Activated B cell treated with CpG ODN at 0.5 μM for 24 hours (primary cell): ENCODE measurements at regions of chr12 and their contacts with region 1.

Region 1: DNA sequence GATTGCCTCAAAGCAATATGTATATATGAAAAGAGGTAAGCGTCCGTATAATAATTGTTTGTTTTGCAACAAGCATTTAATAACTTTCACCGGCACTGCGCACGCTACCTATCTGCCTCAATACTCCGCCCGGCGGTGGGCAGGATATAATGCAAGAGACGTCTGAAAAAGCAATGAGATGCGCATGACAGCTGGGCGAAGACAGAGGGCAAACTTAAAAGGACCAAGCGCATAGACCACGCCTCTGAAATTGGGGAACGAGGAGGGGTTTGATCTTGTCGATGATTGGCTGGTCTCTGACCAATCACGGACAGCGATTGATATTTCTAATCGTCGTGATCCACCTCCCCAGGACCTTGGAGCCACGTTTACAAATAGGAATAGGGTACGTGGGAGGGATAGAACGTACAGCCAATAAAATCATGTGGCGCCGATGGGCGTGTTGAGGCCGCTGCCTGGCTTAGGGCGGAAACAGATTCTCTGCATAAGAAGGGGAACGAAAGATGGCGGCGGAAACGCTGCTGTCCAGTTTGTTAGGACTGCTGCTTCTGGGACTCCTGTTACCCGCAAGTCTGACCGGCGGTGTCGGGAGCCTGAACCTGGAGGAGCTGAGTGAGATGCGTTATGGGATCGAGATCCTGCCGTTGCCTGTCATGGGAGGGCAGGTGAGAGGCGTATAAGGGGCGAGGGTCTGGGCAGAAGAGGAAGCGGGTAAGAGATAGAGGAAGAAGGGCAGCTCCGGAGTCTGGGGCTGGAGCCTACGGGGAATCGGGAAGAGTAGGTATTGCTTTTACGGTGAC is at the start of gene OS9:
- DNase-seq: peak; percentile 73
- ATAC-seq: peak; percentile 91
- H3K4me3 Mint-ChIP-seq: no peak within 1 kb of the TSS
- H3K27ac Mint-ChIP-seq: no peak within 1 kb of the TSS
- H3K4me1 Mint-ChIP-seq: peaks cover 2% of the 10 kb centered on the region
- H3K27me3 Mint-ChIP-seq: peaks cover 8% of the 10 kb centered on the region
- CTCF ChIP-seq: no peak
- total RNA-seq, gene OS9: 166 TPM in 2 replicates

Region 2: GRCh38 chr12:57368349-57369095 is 325.3 kb before region 1 on chr12:
- CTCF ChIA-PET with region 1: no interaction called
- POLR2A ChIA-PET with region 1: no interaction called
- intact Hi-C with region 1: no loop called
- DNase-seq: no peak
- ATAC-seq: no peak
- H3K4me3 Mint-ChIP-seq: no peak overlapping the region
- H3K27ac Mint-ChIP-seq: no peak overlapping the region
- H3K4me1 Mint-ChIP-seq: peaks cover 6% of the 10 kb centered on the region
- H3K27me3 Mint-ChIP-seq: no peaks in the 10 kb centered on the region
- CTCF ChIP-seq: no peak

Region 3: DNA sequence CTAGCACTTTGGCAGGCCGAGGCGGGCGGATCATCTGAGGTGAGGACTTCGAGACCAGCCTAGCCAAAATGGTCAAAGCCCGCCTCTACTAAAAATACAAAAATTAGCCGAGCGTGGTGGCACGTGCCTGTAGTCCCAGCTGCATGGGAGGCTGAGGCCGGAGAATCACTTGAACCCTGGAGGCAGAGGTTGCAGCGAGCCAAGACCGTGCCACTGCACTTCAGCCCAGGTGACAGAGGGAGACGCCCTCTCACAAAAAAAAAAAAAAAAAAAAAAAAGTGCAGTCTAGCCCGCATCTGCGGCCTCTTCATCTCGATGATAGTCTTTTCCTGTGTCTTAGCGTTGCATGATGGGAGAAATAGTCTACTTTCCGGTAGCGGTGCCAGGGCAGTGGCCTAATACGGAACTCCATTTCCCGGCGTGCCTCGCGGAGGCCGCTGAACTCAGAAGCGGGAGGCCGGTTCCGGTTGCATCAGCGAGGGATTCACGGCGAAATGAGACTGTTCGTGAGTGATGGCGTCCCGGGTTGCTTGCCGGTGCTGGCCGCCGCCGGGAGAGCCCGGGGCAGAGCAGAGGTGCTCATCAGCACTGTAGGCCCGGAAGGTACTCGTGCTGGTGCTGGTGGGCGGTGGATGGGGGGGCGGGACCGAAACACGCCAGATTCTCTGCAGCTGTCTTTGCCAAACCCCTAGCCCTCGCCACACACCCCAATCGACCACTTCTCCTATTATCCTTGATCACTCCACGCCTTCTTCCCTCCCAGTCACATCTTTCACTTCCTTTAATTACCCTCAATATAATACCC is 206.1 kb before region 1 on chr12 and contains the start of gene MARS1:
- CTCF ChIA-PET with region 1: no interaction called
- POLR2A ChIA-PET with region 1: no interaction called
- intact Hi-C with region 1: loop called (anchors 5 kb)
- DNase-seq: peak; percentile 83
- ATAC-seq: peak; percentile 97
- H3K4me3 Mint-ChIP-seq: peak within 1 kb of the TSS; percentile 97
- H3K27ac Mint-ChIP-seq: peak within 1 kb of the TSS; percentile 97
- H3K4me1 Mint-ChIP-seq: peaks cover 41% of the 10 kb centered on the region
- H3K27me3 Mint-ChIP-seq: no peaks in the 10 kb centered on the region
- CTCF ChIP-seq: no peak
- total RNA-seq, gene MARS1: 368 and 425 TPM in 2 replicates

Region 4: GRCh38 chr12:57546438-57547383 is 147.1 kb before region 1 on chr12 and contains the start of gene DCTN2:
- CTCF ChIA-PET with region 1: no interaction called
- POLR2A ChIA-PET with region 1: no interaction called
- intact Hi-C with region 1: loop called (anchors 1 kb)
- DNase-seq: peak; percentile 81
- ATAC-seq: peak; percentile 97
- H3K4me3 Mint-ChIP-seq: peak within 1 kb of the TSS; percentile 99
- H3K27ac Mint-ChIP-seq: peak within 1 kb of the TSS; percentile 84
- H3K4me1 Mint-ChIP-seq: peaks cover 36% of the 10 kb centered on the region
- H3K27me3 Mint-ChIP-seq: peaks cover 10% of the 10 kb centered on the region
- CTCF ChIP-seq: no peak
- total RNA-seq, gene DCTN2: 83.3 and 91.8 TPM in 2 replicates

Region 5: DNA sequence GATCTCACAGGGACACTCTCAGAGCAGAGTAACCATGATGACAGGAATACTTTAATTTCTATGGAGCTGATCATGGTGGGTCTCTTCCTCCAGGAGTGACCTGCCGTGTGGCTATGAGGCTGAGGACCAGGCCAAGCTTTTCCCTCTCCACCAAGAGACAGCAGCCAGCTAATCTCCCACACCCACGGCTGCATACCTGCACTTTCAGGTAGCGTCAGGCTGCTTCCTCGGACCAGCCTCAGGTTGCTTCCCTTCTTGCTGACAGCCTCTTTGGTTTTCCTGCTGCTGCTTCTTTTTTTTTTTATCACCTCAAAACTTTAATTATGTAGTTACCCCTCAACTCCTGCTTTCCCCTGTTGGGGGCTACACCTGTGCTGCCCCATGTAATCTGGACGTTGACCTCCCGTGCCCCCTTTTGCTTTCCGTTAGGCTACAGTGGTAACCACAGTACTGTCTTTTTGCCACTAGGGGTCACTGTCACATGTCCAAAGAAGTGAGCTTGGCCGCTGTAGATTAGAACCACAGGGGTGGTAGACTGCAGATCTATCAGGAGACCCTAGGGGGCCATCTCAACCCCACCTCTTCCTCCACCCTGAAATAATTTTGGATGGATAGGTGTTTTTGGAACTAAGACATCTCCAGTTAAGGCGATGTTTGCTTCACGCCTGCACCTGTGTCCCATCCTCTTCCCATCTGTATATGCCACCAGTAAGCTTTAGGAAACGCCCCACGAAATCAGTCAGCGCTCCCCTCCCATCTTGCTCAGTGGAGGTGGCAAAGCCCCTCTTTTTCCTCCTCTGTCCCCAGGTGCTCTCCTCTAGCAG is 110.6 kb before region 1 on chr12:
- CTCF ChIA-PET with region 1: no interaction called
- POLR2A ChIA-PET with region 1: interaction called, 3 read pairs
- intact Hi-C with region 1: loop called (anchors 1 kb)
- DNase-seq: peak; percentile 24
- ATAC-seq: peak; percentile 100
- H3K4me3 Mint-ChIP-seq: no peak overlapping the region
- H3K27ac Mint-ChIP-seq: no peak overlapping the region
- H3K4me1 Mint-ChIP-seq: peaks cover 4% of the 10 kb centered on the region
- H3K27me3 Mint-ChIP-seq: peaks cover 12% of the 10 kb centered on the region
- CTCF ChIP-seq: peak; percentile 85

Region 6: GRCh38 chr12:57632694-57633477 is 61.0 kb before region 1 on chr12 and contains the start of gene B4GALNT1:
- CTCF ChIA-PET with region 1: no interaction called
- POLR2A ChIA-PET with region 1: no interaction called
- intact Hi-C with region 1: loop called (anchors 5 kb)
- DNase-seq: peak; percentile 75
- ATAC-seq: peak; percentile 94
- H3K4me3 Mint-ChIP-seq: peak within 1 kb of the TSS; percentile 73
- H3K27ac Mint-ChIP-seq: no peak within 1 kb of the TSS
- H3K4me1 Mint-ChIP-seq: peaks cover 12% of the 10 kb centered on the region
- H3K27me3 Mint-ChIP-seq: peaks cover 46% of the 10 kb centered on the region
- CTCF ChIP-seq: peak; percentile 27
- total RNA-seq, gene B4GALNT1: 0.31 and 0.51 TPM in 2 replicates